ENCODE measurements at regions of chr15 and their contacts with region 1.

Region 1: GRCh38 chr15:67085818-67086636 is 20.6 kb downstream of the SMAD3 start:
- DNase-seq: peak in 1 of 2 donors; percentile 63
- ATAC-seq: peak; percentile 53 to 85 (median 81)
- H3K4me3 ChIP-seq: no peak overlapping the region
- H3K4me3 Mint-ChIP-seq: peak overlapping the region; percentile 78
- H3K27ac ChIP-seq: peak overlapping the region; percentile 70
- H3K27ac Mint-ChIP-seq: peak overlapping the region; percentile 78 to 91
- H3K4me1 ChIP-seq: peaks cover 100% of the 10 kb centered on the region
- H3K4me1 Mint-ChIP-seq: peaks cover 95 to 98% of the 10 kb centered on the region in 2 donors
- H3K27me3 ChIP-seq: no peaks in the 10 kb centered on the region
- H3K27me3 Mint-ChIP-seq: no peaks in the 10 kb centered on the region
- CTCF ChIP-seq: no peak

Region 2: DNA sequence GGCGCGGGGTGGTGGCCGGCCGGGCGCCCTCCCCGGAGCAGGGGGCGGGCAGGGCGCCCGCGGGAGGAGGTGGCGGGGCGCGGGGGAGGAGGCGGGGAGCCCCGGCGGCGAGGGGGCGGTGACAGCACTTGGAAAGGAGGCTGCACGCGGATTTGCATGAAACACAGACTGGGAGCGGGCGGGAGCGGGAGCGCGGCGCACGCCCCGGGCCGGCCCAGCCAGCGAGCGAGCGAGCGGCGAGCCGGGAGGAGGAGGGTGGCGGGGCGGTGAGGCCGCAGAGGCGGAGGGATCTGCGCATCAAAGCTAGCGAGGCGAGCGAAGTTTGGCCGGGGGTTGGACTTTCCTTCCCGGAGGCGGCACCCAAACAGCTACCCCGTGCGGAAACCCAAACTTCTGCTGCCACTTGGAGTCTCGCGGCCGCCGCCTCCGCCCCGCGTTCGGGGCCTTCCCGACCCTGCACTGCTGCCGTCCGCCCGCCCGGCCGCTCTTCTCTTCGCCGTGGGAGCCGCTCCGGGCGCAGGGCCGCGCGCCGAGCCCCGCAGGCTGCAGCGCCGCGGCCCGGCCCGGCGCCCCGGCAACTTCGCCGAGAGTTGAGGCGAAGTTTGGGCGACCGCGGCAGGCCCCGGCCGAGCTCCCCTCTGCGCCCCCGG is 20.5 kb before region 1 on chr15 and contains the start of gene SMAD3:
- intact Hi-C with region 1: loop called (anchors 2 kb)
- DNase-seq: peak; percentile 64 to 87
- ATAC-seq: peak; percentile 52 to 75 (median 69)
- H3K4me3 ChIP-seq: peak within 1 kb of the TSS; percentile 89
- H3K4me3 Mint-ChIP-seq: peak within 1 kb of the TSS; percentile 93
- H3K27ac ChIP-seq: peak within 1 kb of the TSS; percentile 63
- H3K27ac Mint-ChIP-seq: peak within 1 kb of the TSS; percentile 61 to 92
- H3K4me1 ChIP-seq: peaks cover 50% of the 10 kb centered on the region
- H3K4me1 Mint-ChIP-seq: peaks cover 46 to 50% of the 10 kb centered on the region in 2 donors
- H3K27me3 ChIP-seq: no peaks in the 10 kb centered on the region
- H3K27me3 Mint-ChIP-seq: no peaks in the 10 kb centered on the region
- CTCF ChIP-seq: no peak
- total RNA-seq, gene SMAD3: 47.1 to 72.6 (median 63.0) TPM

Region 3: GRCh38 chr15:67101911-67102598 is 16.0 kb after region 1 on chr15:
- intact Hi-C with region 1: loop called (anchors 1 kb)
- DNase-seq: peak; percentile 44 to 86
- ATAC-seq: peak; percentile 67 to 88 (median 87)
- H3K4me3 ChIP-seq: no peak overlapping the region
- H3K4me3 Mint-ChIP-seq: no peak overlapping the region
- H3K27ac ChIP-seq: peak overlapping the region; percentile 79
- H3K27ac Mint-ChIP-seq: no peak overlapping the region
- H3K4me1 ChIP-seq: peaks cover 95% of the 10 kb centered on the region
- H3K4me1 Mint-ChIP-seq: peaks cover 26 to 42% of the 10 kb centered on the region in 2 donors
- H3K27me3 ChIP-seq: no peaks in the 10 kb centered on the region
- H3K27me3 Mint-ChIP-seq: peaks cover 0 to 8% of the 10 kb centered on the region in 2 donors
- CTCF ChIP-seq: no peak

Region 4: DNA sequence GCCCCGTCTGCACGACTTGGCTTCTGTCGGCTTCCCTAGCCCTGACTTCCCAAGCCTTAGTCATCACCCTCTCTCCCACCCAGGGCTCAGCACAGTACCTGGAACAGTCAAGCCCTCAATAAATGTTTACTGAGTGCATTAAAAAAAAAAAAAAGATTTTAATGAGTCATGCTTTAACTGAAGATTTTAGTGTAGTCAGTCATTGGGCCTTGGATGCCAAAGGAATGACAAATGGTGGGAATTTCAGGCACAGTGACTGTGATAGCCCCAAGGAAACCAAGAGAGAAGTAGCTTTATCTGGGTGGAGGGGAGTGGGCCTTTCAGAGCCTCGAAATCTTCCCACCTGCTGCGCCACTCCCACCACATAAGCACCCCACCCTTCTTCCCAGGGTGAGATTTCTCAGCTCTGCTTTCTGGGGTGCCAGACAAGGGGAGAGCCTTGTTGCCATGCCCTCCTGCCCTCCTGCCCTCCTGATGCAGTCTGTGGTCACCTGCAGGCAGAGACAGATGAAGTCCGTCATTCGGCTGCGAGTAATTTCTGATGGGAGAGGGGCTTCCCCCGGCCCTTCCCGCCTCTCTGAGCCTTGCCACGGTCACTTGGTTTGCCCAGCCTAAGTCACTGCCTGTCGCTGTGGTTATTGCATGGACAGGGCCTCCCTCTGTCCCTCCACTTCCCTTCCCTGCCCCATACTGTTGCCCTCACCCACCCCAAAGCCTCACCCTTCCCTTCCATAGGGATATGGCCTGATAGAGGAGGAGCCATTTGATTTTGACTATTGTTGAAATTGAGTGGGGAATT is 21.2 kb after region 1 on chr15:
- intact Hi-C with region 1: loop called (anchors 1 kb)
- DNase-seq: peak; percentile 29 to 43
- ATAC-seq: peak; percentile 25 to 57 (median 47)
- H3K4me3 ChIP-seq: no peak overlapping the region
- H3K4me3 Mint-ChIP-seq: peak overlapping the region; percentile 65
- H3K27ac ChIP-seq: peak overlapping the region; percentile 50
- H3K27ac Mint-ChIP-seq: peak overlapping the region in 1 of 2 donors; percentile 69
- H3K4me1 ChIP-seq: peaks cover 89% of the 10 kb centered on the region
- H3K4me1 Mint-ChIP-seq: peaks cover 4 to 63% of the 10 kb centered on the region in 2 donors
- H3K27me3 ChIP-seq: no peaks in the 10 kb centered on the region
- H3K27me3 Mint-ChIP-seq: peaks cover 0 to 8% of the 10 kb centered on the region in 2 donors
- CTCF ChIP-seq: no peak

Region 5: DNA sequence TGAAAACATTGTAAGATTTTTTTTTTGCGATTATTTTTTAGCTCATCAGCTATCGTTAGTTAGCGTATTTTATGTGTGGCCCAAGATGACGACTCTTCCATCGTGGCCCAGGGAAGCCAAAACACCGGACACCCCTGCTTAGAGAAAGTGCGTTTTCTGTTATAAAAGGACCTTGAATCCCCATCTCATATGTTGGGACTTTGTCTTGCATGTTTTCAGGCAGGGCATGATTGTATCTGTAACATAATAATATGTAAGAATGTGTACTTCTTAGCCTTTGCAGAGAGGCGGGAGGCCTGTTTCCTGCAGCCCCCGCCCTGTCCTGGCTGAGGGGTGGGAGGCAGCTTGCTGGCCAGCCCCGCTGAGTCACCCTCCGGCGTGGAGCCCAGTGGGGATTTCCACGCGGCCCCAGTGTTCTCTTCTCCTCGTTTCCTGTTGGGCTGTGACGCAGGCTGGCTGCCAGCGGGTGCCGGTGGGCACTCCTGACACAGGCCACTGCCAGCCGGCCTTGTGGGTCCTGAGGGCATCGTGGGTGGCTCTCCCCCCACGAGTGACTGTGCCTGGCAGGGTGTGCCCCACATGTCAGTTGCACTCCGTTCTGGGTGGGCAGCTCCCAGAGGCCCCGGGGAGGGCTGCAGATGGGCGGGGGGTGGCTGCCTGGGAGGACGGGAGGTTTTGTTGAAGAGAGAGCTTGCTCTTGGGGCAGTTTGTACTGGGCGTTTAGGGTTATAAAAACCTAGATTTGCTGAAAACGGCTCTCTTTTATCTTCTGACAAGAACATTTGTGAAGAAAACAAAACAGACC is 35.0 kb after region 1 on chr15:
- intact Hi-C with region 1: loop called (anchors 1 kb)
- DNase-seq: peak; percentile 92 to 94
- ATAC-seq: peak; percentile 85 to 93 (median 91)
- H3K4me3 ChIP-seq: peak overlapping the region; percentile 22
- H3K4me3 Mint-ChIP-seq: peak overlapping the region; percentile 84
- H3K27ac ChIP-seq: peak overlapping the region; percentile 96
- H3K27ac Mint-ChIP-seq: peak overlapping the region; percentile 97 to 98
- H3K4me1 ChIP-seq: peaks cover 76% of the 10 kb centered on the region
- H3K4me1 Mint-ChIP-seq: peaks cover 80 to 81% of the 10 kb centered on the region in 2 donors
- H3K27me3 ChIP-seq: no peaks in the 10 kb centered on the region
- H3K27me3 Mint-ChIP-seq: no peaks in the 10 kb centered on the region
- CTCF ChIP-seq: no peak

Region 6: GRCh38 chr15:67134067-67134838 is 48.2 kb after region 1 on chr15:
- intact Hi-C with region 1: loop called (anchors 1 kb)
- DNase-seq: peak; percentile 61 to 91
- ATAC-seq: peak; percentile 91 to 97 (median 95)
- H3K4me3 ChIP-seq: peak overlapping the region; percentile 20
- H3K4me3 Mint-ChIP-seq: peak overlapping the region; percentile 93
- H3K27ac ChIP-seq: peak overlapping the region; percentile 92
- H3K27ac Mint-ChIP-seq: peak overlapping the region; percentile 100
- H3K4me1 ChIP-seq: peaks cover 77% of the 10 kb centered on the region
- H3K4me1 Mint-ChIP-seq: peaks cover 80 to 88% of the 10 kb centered on the region in 2 donors
- H3K27me3 ChIP-seq: no peaks in the 10 kb centered on the region
- H3K27me3 Mint-ChIP-seq: no peaks in the 10 kb centered on the region
- CTCF ChIP-seq: no peak

Region 7: GRCh38 chr15:67254238-67255175 is 168.5 kb after region 1 on chr15 and contains the starts of genes AAGAB and IQCH:
- intact Hi-C with region 1: loop called (anchors 5 kb)
- DNase-seq: peak; percentile 96 to 97
- ATAC-seq: peak; percentile 92 to 99 (median 95)
- H3K4me3 ChIP-seq: peak within 1 kb of the TSS; percentile 89
- H3K4me3 Mint-ChIP-seq: peak within 1 kb of the TSS; percentile 99
- H3K27ac ChIP-seq: peak within 1 kb of the TSS; percentile 87
- H3K27ac Mint-ChIP-seq: peak within 1 kb of the TSS; percentile 95 to 98
- H3K4me1 ChIP-seq: peaks cover 15% of the 10 kb centered on the region
- H3K4me1 Mint-ChIP-seq: peaks cover 39 to 41% of the 10 kb centered on the region in 2 donors
- H3K27me3 ChIP-seq: no peaks in the 10 kb centered on the region
- H3K27me3 Mint-ChIP-seq: peaks cover 3 to 10% of the 10 kb centered on the region in 2 donors
- CTCF ChIP-seq: no peak
- total RNA-seq, gene AAGAB: 41.1 to 44.3 (median 42.5) TPM
- total RNA-seq, gene IQCH: 0.78 to 1.4 (median 0.86) TPM

Measured in natural killer cell (primary cell).